ENCODE measurements at regions of chr17 and their contacts with region 1.

Region 1: DNA sequence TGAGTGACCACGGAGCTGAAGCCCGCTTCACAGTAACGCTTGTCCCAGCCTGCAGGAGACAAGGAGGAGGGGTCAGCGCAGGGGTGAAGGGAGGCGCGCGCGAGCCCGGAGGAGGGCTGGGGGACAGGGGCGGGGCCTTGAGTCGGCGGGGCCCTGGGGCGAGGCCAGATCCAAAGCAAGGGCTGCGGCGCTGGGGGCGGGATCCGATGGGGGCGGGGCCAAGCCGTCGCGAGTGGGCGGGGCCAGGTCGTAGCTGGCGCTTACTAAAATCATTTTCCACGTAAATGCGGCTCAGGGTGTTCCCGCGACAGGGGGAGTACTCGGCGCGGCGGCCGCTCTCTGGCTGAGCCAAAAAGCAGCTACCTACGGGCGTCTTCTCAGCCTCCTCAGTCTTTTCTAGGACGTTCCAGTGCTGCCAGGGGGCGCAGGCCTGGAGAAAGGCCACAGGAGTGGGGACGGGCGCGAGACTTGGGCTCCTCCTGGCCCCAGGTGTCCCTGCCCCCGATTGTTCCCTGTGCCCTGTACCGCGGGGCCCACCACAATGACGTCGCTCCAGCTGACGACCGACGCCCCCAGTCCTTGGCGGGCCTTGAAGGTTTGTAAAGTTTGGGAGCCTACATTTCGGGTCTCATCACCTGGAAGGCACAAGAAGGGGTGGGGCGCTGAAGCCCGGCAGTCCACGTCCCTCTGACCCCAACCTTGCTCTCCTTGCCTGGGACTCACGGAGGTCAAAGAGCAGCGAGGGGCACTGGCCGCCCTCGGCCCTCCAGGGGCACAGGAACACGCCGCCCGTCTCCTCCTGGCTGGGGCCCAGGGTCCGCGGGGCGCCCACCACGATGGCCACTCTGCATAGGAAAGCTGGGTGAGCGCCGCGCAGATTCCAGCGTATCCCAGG is 3.9 kb downstream of the ITGA2B start:
- DNase-seq: peak; percentile 65 to 89 (median 80)
- ATAC-seq: peak; percentile 96
- H3K4me3 ChIP-seq: peak overlapping the region; percentile 60 to 62
- H3K4me3 Mint-ChIP-seq: peak overlapping the region; percentile 75
- H3K27ac ChIP-seq: no peak overlapping the region
- H3K27ac Mint-ChIP-seq: no peak overlapping the region
- H3K4me1 ChIP-seq: peaks cover 18% of the 10 kb centered on the region
- H3K4me1 Mint-ChIP-seq: peaks cover 22% of the 10 kb centered on the region
- H3K27me3 ChIP-seq: peaks cover 3 to 8% of the 10 kb centered on the region in 2 experiments
- H3K27me3 Mint-ChIP-seq: peaks cover 31% of the 10 kb centered on the region
- CTCF ChIP-seq: no peak

Region 2: GRCh38 chr17:44363613-44364159 is 21.8 kb before region 1 on chr17 and contains the start of gene FAM171A2:
- CTCF ChIA-PET with region 1: no interaction called
- POLR2A ChIA-PET with region 1: no interaction called
- intact Hi-C with region 1: loop called in 1 of 2 experiments (anchors 2 kb)
- DNase-seq: peak; percentile 44 to 86 (median 61)
- ATAC-seq: peak; percentile 92
- H3K4me3 ChIP-seq: peak within 1 kb of the TSS; percentile 51 to 59
- H3K4me3 Mint-ChIP-seq: peak within 1 kb of the TSS; percentile 80
- H3K27ac ChIP-seq: no peak within 1 kb of the TSS
- H3K27ac Mint-ChIP-seq: no peak within 1 kb of the TSS
- H3K4me1 ChIP-seq: peaks cover 3% of the 10 kb centered on the region
- H3K4me1 Mint-ChIP-seq: peaks cover 8% of the 10 kb centered on the region
- H3K27me3 ChIP-seq: peaks cover 0 to 12% of the 10 kb centered on the region in 2 experiments
- H3K27me3 Mint-ChIP-seq: peaks cover 19% of the 10 kb centered on the region
- CTCF ChIP-seq: peak; percentile 89
- total RNA-seq, gene FAM171A2: 0.24 to 0.44 TPM

Measured in CD8-positive, alpha-beta T cell (primary cell).